ENCODE measurements at regions of chrX and their contacts with region 1.

Region 1: DNA sequence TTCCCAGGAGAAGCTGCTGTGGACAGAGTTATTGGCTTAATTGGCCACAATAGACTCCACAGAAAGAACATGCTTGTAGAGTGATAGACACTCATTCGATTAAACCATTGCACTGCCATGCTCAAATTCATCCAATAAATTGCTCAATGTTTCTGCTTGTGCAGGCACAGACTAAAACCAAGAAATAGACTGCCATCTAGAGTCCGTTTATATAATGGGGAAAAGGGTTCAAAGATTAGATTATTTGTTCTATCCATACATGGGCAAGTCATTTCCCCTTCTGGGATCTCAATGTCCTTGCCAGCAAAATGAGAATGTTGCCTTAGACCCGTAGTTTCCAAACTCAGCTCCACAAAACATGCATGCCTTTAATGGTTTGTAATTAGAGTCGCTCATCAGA is 8.7 kb downstream of the SMIM10 start:
- H3K4me3 ChIP-seq: no peak overlapping the region
- H3K27ac ChIP-seq: no peak overlapping the region
- H3K4me1 ChIP-seq: no peaks in the 10 kb centered on the region
- CTCF ChIP-seq: no peak

Region 2: DNA sequence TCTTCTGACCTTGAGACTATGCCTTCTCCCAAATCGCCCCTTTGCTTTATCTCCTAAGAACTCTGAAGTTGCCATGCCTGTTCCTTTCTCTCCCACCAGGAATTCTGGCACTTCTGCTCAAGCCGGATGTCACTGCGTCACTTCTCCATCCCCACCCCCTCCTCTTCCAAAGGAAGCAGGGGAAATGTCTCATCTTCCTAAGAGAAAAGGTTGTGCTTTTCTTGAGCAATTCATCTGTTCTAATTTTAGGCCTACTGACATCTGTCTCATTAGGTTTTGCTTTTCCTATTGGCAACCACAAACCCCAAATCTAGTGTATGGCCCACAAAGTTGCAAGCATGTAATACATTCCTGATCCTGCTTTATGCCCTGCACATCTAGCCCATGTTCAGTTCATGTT is 178.1 kb before region 1 on chrX:
- CTCF ChIA-PET with region 1: no interaction called
- POLR2A ChIA-PET with region 1: no interaction called
- H3K4me3 ChIP-seq: no peak overlapping the region
- H3K27ac ChIP-seq: no peak overlapping the region
- H3K4me1 ChIP-seq: no peaks in the 10 kb centered on the region
- CTCF ChIP-seq: no peak

Region 3: DNA sequence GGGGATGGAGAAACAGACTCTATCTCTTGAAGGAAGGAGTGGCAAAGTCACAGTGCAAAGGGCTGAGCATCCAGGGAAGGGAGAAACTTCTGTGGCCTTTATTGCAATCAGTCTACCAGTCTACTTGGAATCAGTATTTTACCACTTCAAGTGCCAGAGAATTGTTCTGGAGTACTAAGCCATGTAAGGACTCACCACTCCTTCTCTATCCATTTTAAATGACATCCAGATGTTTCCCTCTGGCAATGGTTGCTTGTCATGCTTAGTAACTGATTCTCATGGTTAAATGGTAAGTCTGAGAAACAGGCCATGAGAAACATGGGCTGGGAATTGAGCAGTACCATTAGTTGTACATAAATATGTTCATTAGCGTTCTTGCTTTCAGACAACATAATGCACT is 29.7 kb before region 1 on chrX:
- CTCF ChIA-PET with region 1: interaction called, 10 read pairs
- POLR2A ChIA-PET with region 1: no interaction called
- H3K4me3 ChIP-seq: no peak overlapping the region
- H3K27ac ChIP-seq: no peak overlapping the region
- H3K4me1 ChIP-seq: no peaks in the 10 kb centered on the region
- CTCF ChIP-seq: no peak

Region 4: GRCh38 chrX:135009838-135010237 is 10.4 kb after region 1 on chrX:
- CTCF ChIA-PET with region 1: no interaction called
- POLR2A ChIA-PET with region 1: no interaction called
- H3K4me3 ChIP-seq: no peak overlapping the region
- H3K27ac ChIP-seq: no peak overlapping the region
- H3K4me1 ChIP-seq: no peaks in the 10 kb centered on the region
- CTCF ChIP-seq: no peak

Region 5: GRCh38 chrX:135168486-135168885 is 169.0 kb after region 1 on chrX:
- CTCF ChIA-PET with region 1: no interaction called
- POLR2A ChIA-PET with region 1: no interaction called
- H3K4me3 ChIP-seq: no peak overlapping the region
- H3K27ac ChIP-seq: no peak overlapping the region
- H3K4me1 ChIP-seq: no peaks in the 10 kb centered on the region
- CTCF ChIP-seq: no peak